Testis (tissue), 5 donors: ENCODE measurements at regions of chr6 and their contacts with region 1.

Region 1: GRCh38 chr6:32413427-32414047 is 6.6 kb upstream of the BTNL2 start:
- DNase-seq: peak; percentile 91
- H3K4me3 ChIP-seq: no peak overlapping the region
- H3K27ac ChIP-seq: no peak overlapping the region
- H3K4me1 ChIP-seq: no peaks in the 10 kb centered on the region
- H3K27me3 ChIP-seq: no peaks in the 10 kb centered on the region
- CTCF ChIP-seq: peak; percentile 84 to 91 (median 87)
- POLR2A ChIP-seq: no peak

Region 2: GRCh38 chr6:32244946-32245398 is 168.6 kb before region 1 on chr6:
- intact Hi-C with region 1: loop called (anchors 10 kb)
- DNase-seq: peak; percentile 90
- H3K4me3 ChIP-seq: no peak overlapping the region
- H3K27ac ChIP-seq: peak overlapping the region; percentile 44 to 66
- H3K4me1 ChIP-seq: peaks cover 5% of the 10 kb centered on the region
- H3K27me3 ChIP-seq: no peaks in the 10 kb centered on the region
- CTCF ChIP-seq: peak; percentile 89 to 95 (median 94)
- POLR2A ChIP-seq: no peak

Region 3: GRCh38 chr6:32700391-32701040 is 287.0 kb after region 1 on chr6:
- intact Hi-C with region 1: loop called (anchors 10 kb)
- DNase-seq: peak; percentile 39
- H3K4me3 ChIP-seq: no peak overlapping the region
- H3K27ac ChIP-seq: no peak overlapping the region
- H3K4me1 ChIP-seq: no peaks in the 10 kb centered on the region
- H3K27me3 ChIP-seq: no peaks in the 10 kb centered on the region
- CTCF ChIP-seq: peak; percentile 53 to 69 (median 53)
- POLR2A ChIP-seq: no peak

Region 4: GRCh38 chr6:32796848-32797776 is 383.6 kb after region 1 on chr6:
- intact Hi-C with region 1: loop called (anchors 10 kb)
- DNase-seq: peak; percentile 92
- H3K4me3 ChIP-seq: no peak overlapping the region
- H3K27ac ChIP-seq: no peak overlapping the region
- H3K4me1 ChIP-seq: no peaks in the 10 kb centered on the region
- H3K27me3 ChIP-seq: no peaks in the 10 kb centered on the region
- CTCF ChIP-seq: peak; percentile 95 to 98 (median 96)
- POLR2A ChIP-seq: no peak